Heart right ventricle (tissue), 16 donors: ENCODE measurements at regions of chr1 and their contacts with region 1.

Region 1: GRCh38 chr1:28792644-28793121 is 19.3 kb upstream of the OPRD1 start:
- DNase-seq: no peak
- ATAC-seq: peak in 2 of 8 donors; percentile 56 to 74
- H3K4me3 ChIP-seq: no peak overlapping the region
- H3K27ac ChIP-seq: no peak overlapping the region
- H3K4me1 ChIP-seq: peaks cover 0 to 11% (median 0%) of the 10 kb centered on the region in 9 donors
- H3K27me3 ChIP-seq: peaks cover 0 to 4% (median 0%) of the 10 kb centered on the region in 7 donors
- CTCF ChIP-seq: peak in 2 of 9 donors; percentile 8 to 38

Region 2: GRCh38 chr1:28830814-28831213 is 38.1 kb after region 1 on chr1:
- intact Hi-C with region 1: loop called in 1 of 10 experiments (anchors 5 kb)
- DNase-seq: no peak
- ATAC-seq: no peak
- H3K4me3 ChIP-seq: no peak overlapping the region
- H3K27ac ChIP-seq: no peak overlapping the region
- H3K4me1 ChIP-seq: peaks cover 0 to 6% (median 0%) of the 10 kb centered on the region in 9 donors
- H3K27me3 ChIP-seq: peaks cover 0 to 14% (median 0%) of the 10 kb centered on the region in 7 donors
- CTCF ChIP-seq: no peak

Region 3: DNA sequence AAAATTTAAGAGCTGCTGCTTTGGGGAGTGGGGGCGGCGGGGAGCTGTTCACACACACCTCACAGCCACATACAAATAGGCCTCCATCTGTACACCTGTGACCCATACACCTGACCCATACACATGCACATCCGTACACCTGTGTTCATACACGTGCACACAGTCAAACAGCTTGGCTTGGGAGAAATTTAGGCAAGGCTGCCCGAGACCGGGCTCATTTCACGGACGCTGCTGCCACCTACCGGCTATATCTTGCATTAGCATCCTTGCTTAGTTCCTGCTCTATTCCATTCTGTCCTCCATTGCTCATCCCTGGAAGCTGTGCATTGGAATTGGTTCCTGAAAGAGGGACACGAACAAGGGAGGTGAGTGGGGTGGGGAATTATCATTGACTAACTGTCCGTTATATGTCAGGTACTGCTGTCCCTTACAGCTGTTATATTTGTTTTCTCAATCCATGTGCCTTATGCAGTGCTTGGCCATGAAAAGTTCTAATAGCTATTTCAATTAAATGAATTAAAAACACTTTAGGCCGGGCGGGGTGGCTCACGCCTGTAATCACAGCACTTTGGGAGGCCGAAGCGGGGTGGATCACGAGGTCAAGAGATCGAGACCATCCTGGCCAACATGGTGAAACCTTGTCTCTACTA is 84.6 kb after region 1 on chr1:
- intact Hi-C with region 1: loop called in 2 of 10 experiments (anchors 2 kb)
- DNase-seq: peak; percentile 68 to 73
- ATAC-seq: peak; percentile 70 to 86 (median 84)
- H3K4me3 ChIP-seq: no peak overlapping the region
- H3K27ac ChIP-seq: no peak overlapping the region
- H3K4me1 ChIP-seq: peaks cover 0 to 5% (median 0%) of the 10 kb centered on the region in 9 donors
- H3K27me3 ChIP-seq: peaks cover 0 to 25% (median 7%) of the 10 kb centered on the region in 7 donors
- CTCF ChIP-seq: peak; percentile 87 to 95 (median 93)

Region 4: DNA sequence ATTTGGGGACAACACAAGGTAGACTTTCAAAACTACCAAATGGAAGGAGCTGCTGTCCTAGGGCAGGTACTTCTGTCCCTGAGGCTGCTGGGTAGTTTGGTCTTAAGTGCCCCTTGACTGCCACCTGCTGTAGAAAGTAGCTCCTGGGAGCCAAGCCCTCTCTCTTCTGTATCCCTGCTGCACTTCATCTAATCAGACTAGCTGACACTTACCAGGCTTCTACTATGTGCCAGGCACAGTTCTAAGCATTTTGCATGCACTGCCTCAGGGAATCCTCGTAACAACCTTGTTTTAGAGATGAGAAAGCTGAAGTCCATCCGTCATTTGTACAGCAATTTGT is 404.9 kb after region 1 on chr1:
- intact Hi-C with region 1: loop called in 8 of 10 experiments (anchors 5 to 10 kb)
- DNase-seq: no peak
- ATAC-seq: peak in 5 of 8 donors; percentile 50 to 70 (median 52)
- H3K4me3 ChIP-seq: no peak overlapping the region
- H3K27ac ChIP-seq: no peak overlapping the region
- H3K4me1 ChIP-seq: peaks cover 3 to 11% (median 8%) of the 10 kb centered on the region in 9 donors
- H3K27me3 ChIP-seq: no peaks in the 10 kb centered on the region
- CTCF ChIP-seq: peak in 7 of 9 donors; percentile 20 to 52 (median 43)

Region 5: GRCh38 chr1:29703596-29704370 is 911.1 kb after region 1 on chr1:
- intact Hi-C with region 1: no loop called
- DNase-seq: no peak
- ATAC-seq: no peak
- H3K4me3 ChIP-seq: no peak overlapping the region
- H3K27ac ChIP-seq: no peak overlapping the region
- H3K4me1 ChIP-seq: peaks cover 0 to 15% (median 0%) of the 10 kb centered on the region in 9 donors
- H3K27me3 ChIP-seq: peaks cover 0 to 56% (median 40%) of the 10 kb centered on the region in 7 donors
- CTCF ChIP-seq: peak; percentile 6 to 67 (median 57)